Calu3 (cell line): ENCODE measurements at regions of chr9 and their contacts with region 1.

Region 1: GRCh38 chr9:17116400-17116837 is 18.4 kb upstream of the CNTLN start:
- DNase-seq: peak; percentile 4
- H3K4me3 Mint-ChIP-seq: no peak overlapping the region
- H3K27ac Mint-ChIP-seq: no peak overlapping the region
- H3K4me1 Mint-ChIP-seq: no peaks in the 10 kb centered on the region
- H3K27me3 Mint-ChIP-seq: no peaks in the 10 kb centered on the region
- CTCF ChIP-seq: no peak

Region 2: GRCh38 chr9:16575142-16575985 is 541.1 kb before region 1 on chr9:
- CTCF ChIA-PET with region 1: no interaction called
- intact Hi-C with region 1: no loop called
- DNase-seq: no peak
- H3K4me3 Mint-ChIP-seq: no peak overlapping the region
- H3K27ac Mint-ChIP-seq: no peak overlapping the region
- H3K4me1 Mint-ChIP-seq: peaks cover 18% of the 10 kb centered on the region
- H3K27me3 Mint-ChIP-seq: no peaks in the 10 kb centered on the region
- CTCF ChIP-seq: no peak

Region 3: GRCh38 chr9:17219261-17219660 is 102.8 kb after region 1 on chr9:
- CTCF ChIA-PET with region 1: no interaction called
- intact Hi-C with region 1: loop called (anchors 5 kb)
- DNase-seq: no peak
- H3K4me3 Mint-ChIP-seq: no peak overlapping the region
- H3K27ac Mint-ChIP-seq: no peak overlapping the region
- H3K4me1 Mint-ChIP-seq: no peaks in the 10 kb centered on the region
- H3K27me3 Mint-ChIP-seq: no peaks in the 10 kb centered on the region
- CTCF ChIP-seq: no peak

Region 4: DNA sequence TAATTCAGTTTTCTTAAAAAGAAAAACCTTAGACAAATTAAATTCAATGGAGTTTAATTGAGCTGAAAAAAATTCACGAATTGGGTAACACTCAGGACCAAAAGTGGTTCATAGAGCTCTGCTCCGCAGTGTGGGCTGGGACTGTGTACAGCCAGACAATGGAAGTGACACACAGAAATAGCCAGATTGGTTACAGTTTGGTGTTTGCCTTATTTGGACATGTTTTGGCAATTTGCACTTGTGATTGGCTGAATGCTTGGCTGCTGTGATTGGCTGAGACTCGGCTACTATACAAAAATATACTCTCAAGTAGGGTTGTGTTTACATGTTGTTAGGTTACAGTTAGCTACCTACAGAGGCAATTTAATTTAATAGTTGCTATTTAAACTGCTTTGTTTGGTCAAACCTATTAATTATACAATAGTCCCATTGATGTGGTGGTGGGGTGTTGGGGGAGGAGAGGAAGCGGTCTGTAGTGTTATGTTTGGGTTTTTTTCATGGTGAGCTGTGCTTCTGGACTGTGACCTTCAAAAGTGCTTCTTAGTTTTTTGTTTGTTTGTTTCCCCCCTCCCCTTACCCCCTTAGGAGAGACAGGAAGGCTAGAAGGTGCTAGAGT is 113.6 kb after region 1 on chr9:
- CTCF ChIA-PET with region 1: no interaction called
- intact Hi-C with region 1: loop called (anchors 5 kb)
- DNase-seq: peak; percentile 20
- H3K4me3 Mint-ChIP-seq: peak overlapping the region; percentile 44
- H3K27ac Mint-ChIP-seq: peak overlapping the region; percentile 96
- H3K4me1 Mint-ChIP-seq: peaks cover 25% of the 10 kb centered on the region
- H3K27me3 Mint-ChIP-seq: no peaks in the 10 kb centered on the region
- CTCF ChIP-seq: no peak

Region 5: DNA sequence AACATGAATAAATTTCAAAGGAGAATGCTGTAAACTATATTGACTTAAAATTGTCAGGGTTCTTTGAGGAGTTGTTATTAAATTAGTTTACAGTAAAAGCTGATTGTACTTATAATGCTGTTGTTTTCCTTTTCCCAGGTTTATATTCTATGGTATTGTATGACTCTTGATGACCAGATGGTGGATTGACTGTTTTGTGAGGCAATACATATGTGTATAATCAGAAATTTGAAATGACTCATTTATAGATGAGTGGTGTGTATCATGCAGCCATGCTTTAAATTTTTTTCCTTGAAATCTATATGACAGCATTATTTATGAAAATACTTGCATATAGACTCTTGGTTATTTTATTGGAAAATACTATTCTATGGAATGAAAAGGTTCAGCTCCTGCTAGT is 213.7 kb after region 1 on chr9:
- CTCF ChIA-PET with region 1: no interaction called
- intact Hi-C with region 1: loop called (anchors 10 kb)
- DNase-seq: no peak
- H3K4me3 Mint-ChIP-seq: no peak overlapping the region
- H3K27ac Mint-ChIP-seq: no peak overlapping the region
- H3K4me1 Mint-ChIP-seq: no peaks in the 10 kb centered on the region
- H3K27me3 Mint-ChIP-seq: no peaks in the 10 kb centered on the region
- CTCF ChIP-seq: no peak

Region 6: GRCh38 chr9:17402309-17402708 is 285.9 kb after region 1 on chr9:
- CTCF ChIA-PET with region 1: no interaction called
- intact Hi-C with region 1: loop called (anchors 1 kb)
- DNase-seq: no peak
- H3K4me3 Mint-ChIP-seq: no peak overlapping the region
- H3K27ac Mint-ChIP-seq: no peak overlapping the region
- H3K4me1 Mint-ChIP-seq: no peaks in the 10 kb centered on the region
- H3K27me3 Mint-ChIP-seq: no peaks in the 10 kb centered on the region
- CTCF ChIP-seq: no peak

Region 7: DNA sequence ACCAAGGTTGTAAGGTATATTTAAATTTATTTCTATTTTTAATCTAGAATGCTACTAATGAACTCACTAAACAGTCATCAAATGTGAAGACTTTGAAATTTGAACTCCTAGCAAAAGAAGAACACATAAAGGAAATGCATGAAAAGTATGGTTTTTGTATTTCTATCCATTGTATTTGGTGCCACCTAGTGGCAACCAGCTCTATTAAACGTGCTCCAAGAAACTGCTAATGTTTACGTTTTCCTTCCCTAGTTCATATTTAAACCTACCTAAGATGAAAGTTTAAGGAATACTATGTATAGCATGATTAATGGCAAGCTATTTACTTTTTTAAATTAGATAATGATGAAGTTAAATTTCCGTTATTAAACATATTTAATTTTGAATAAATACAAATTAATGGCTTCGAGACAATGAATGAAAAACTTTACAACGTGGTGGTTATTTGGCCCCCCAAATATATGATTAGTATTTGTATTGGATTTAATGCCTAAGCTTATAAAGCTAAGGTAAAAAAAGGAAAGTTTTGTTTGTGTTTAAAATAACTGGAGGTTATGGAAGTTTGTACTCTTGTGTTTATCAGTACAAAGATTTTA is 346.5 kb after region 1 on chr9:
- CTCF ChIA-PET with region 1: interaction called, 3 read pairs
- intact Hi-C with region 1: loop called (anchors 1 kb)
- DNase-seq: peak; percentile 28
- H3K4me3 Mint-ChIP-seq: no peak overlapping the region
- H3K27ac Mint-ChIP-seq: no peak overlapping the region
- H3K4me1 Mint-ChIP-seq: no peaks in the 10 kb centered on the region
- H3K27me3 Mint-ChIP-seq: no peaks in the 10 kb centered on the region
- CTCF ChIP-seq: peak; percentile 17